ENCODE measurements at regions of chr7 and their contacts with region 1.

Region 1: DNA sequence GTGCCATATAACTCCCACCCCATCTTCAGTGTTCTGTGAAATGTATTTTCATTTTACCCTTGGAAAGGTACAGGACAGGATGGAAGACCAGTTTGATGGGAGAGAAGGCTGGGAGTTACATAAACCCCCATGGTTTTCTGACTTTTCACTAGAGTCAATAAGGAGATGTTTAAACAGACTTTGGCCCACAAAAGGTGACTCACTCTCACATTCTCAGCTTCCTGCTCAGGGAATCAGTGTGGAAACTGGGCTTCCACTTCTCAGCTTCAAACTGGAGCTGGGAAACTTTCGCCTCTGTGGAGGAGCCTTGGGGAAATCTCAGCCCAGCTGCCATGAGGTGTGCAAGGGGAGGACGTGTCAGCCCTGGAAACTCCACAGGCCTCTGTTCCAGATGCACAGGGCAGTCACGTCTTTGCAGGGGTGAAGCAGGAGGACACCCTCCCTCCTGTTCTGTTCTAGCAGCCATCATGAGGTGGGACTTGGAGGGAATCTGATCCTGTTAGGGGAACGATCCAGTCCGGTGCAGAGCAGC is 560.5 kb upstream of the GALNT17 start:
- DNase-seq: peak; percentile 66 to 68
- H3K4me3 ChIP-seq: peak overlapping the region; percentile 25
- H3K4me3 Mint-ChIP-seq: peak overlapping the region; percentile 4
- H3K27ac Mint-ChIP-seq: peak overlapping the region; percentile 92
- H3K4me1 ChIP-seq: peaks cover 28% of the 10 kb centered on the region
- H3K4me1 Mint-ChIP-seq: peaks cover 40% of the 10 kb centered on the region
- H3K27me3 ChIP-seq: no peaks in the 10 kb centered on the region
- H3K27me3 Mint-ChIP-seq: no peaks in the 10 kb centered on the region
- CTCF ChIP-seq: no peak

Region 2: GRCh38 chr7:70215491-70215890 is 356.0 kb before region 1 on chr7:
- CTCF ChIA-PET with region 1: no interaction called
- POLR2A ChIA-PET with region 1: no interaction called
- intact Hi-C with region 1: loop called (anchors 2 kb)
- DNase-seq: no peak
- H3K4me3 ChIP-seq: no peak overlapping the region
- H3K4me3 Mint-ChIP-seq: no peak overlapping the region
- H3K27ac Mint-ChIP-seq: peak overlapping the region; percentile 61
- H3K4me1 ChIP-seq: peaks cover 84% of the 10 kb centered on the region
- H3K4me1 Mint-ChIP-seq: peaks cover 38% of the 10 kb centered on the region
- H3K27me3 ChIP-seq: no peaks in the 10 kb centered on the region
- H3K27me3 Mint-ChIP-seq: no peaks in the 10 kb centered on the region
- CTCF ChIP-seq: no peak

Region 3: DNA sequence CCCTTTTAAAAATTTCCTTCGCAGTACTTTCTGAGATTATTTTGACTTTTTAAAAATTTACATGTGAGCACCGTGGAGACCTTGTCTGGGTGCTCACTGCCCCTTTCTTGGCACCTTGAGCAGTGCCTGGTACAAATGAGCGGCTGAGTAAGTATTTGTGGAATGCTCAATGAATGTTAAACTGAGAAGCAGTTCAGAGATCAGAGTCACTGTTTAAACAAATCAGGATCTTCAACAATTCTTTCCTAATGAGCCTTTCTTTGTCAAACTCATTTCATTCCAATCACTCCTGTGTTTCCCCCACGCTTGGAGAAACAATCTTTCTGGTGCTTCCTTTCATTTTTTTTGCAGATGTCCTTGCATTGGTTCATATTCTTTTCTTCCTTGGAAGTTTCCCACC is 50.9 kb before region 1 on chr7:
- CTCF ChIA-PET with region 1: no interaction called
- POLR2A ChIA-PET with region 1: no interaction called
- intact Hi-C with region 1: loop called (anchors 2 kb)
- DNase-seq: no peak
- H3K4me3 ChIP-seq: no peak overlapping the region
- H3K4me3 Mint-ChIP-seq: peak overlapping the region; percentile 40
- H3K27ac Mint-ChIP-seq: peak overlapping the region; percentile 31
- H3K4me1 ChIP-seq: peaks cover 37% of the 10 kb centered on the region
- H3K4me1 Mint-ChIP-seq: peaks cover 15% of the 10 kb centered on the region
- H3K27me3 ChIP-seq: no peaks in the 10 kb centered on the region
- H3K27me3 Mint-ChIP-seq: no peaks in the 10 kb centered on the region
- CTCF ChIP-seq: no peak

Region 4: DNA sequence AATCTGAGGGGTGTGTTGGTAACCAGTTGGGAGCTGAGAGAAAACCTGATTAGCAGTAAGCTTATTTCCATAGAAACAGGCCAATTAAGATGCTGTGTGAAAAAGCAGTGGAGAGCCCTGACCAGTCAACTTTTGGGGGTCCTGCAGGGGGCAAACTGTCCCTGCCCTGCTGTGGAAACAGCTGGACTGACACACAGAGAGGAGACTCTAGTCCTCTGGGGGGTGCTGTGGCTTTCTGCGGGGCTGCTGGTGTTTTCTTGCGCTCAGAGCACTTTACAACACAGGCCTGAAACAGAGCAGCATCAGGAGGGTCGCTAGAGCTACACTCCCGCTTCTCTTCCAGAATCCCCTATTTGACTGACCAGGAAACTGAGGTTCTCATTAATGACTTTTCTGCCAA is 13.6 kb after region 1 on chr7:
- CTCF ChIA-PET with region 1: no interaction called
- POLR2A ChIA-PET with region 1: no interaction called
- intact Hi-C with region 1: loop called (anchors 1 kb)
- DNase-seq: no peak
- H3K4me3 ChIP-seq: no peak overlapping the region
- H3K4me3 Mint-ChIP-seq: no peak overlapping the region
- H3K27ac Mint-ChIP-seq: no peak overlapping the region
- H3K4me1 ChIP-seq: peaks cover 10% of the 10 kb centered on the region
- H3K4me1 Mint-ChIP-seq: peaks cover 16% of the 10 kb centered on the region
- H3K27me3 ChIP-seq: no peaks in the 10 kb centered on the region
- H3K27me3 Mint-ChIP-seq: no peaks in the 10 kb centered on the region
- CTCF ChIP-seq: no peak

Measured in Caco-2 (cell line).